ENCODE measurements at regions of chr15 and their contacts with region 1.

Region 1: GRCh38 chr15:71575474-71576045 is 234.8 kb upstream of the NR2E3 start:
- DNase-seq: peak; percentile 36
- H3K4me3 ChIP-seq: no peak overlapping the region
- H3K27ac ChIP-seq: no peak overlapping the region
- H3K4me1 ChIP-seq: no peaks in the 10 kb centered on the region
- H3K27me3 ChIP-seq: no peaks in the 10 kb centered on the region
- CTCF ChIP-seq: peak; percentile 65
- EP300 ChIP-seq: no peak
- RAD21 ChIP-seq: peak; percentile 81

Region 2: DNA sequence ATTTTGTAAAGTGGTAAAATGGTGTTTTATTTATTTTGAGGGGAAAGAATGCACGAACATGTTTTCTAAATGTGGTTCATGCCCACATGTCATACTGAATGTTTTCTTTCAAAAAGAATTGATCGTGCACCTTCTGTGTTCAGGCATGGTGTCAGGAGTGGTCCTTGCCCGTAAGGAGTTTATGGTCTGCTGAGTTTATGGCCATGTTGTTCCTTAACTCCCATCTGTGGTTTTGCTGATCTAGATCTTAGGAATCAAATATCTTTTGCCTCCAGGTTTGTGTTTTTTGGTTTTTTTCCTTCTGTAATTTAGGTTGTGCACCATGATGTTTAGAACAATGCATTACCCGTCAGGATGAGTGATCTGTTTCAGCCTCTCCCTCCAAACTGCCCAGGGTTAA is 69.6 kb before region 1 on chr15:
- CTCF ChIA-PET with region 1: no interaction called
- POLR2A ChIA-PET with region 1: no interaction called
- DNase-seq: no peak
- H3K4me3 ChIP-seq: no peak overlapping the region
- H3K27ac ChIP-seq: no peak overlapping the region
- H3K4me1 ChIP-seq: no peaks in the 10 kb centered on the region
- H3K27me3 ChIP-seq: no peaks in the 10 kb centered on the region
- CTCF ChIP-seq: no peak
- EP300 ChIP-seq: no peak
- RAD21 ChIP-seq: no peak

Region 3: DNA sequence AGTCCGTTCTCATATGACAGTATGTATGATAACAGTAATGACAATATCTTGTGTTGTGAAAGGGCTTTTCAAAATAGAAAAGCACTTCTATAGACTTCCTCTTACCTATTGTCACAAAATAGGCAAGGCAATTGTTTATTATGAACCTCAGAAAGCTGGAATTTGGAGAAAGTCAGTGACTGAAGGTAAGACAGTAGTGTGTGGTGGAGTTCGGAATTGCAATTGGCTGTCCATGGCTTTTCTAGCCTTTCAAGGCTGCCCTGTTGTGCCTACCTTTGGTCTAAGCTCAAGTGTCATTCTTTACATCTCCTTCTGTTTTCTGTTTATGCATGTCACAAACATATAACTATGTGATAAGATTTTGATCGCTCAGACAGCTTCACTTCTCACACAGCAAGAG is 15.5 kb after region 1 on chr15:
- CTCF ChIA-PET with region 1: interaction called, 21 read pairs
- POLR2A ChIA-PET with region 1: no interaction called
- DNase-seq: peak; percentile 23
- H3K4me3 ChIP-seq: no peak overlapping the region
- H3K27ac ChIP-seq: no peak overlapping the region
- H3K4me1 ChIP-seq: no peaks in the 10 kb centered on the region
- H3K27me3 ChIP-seq: no peaks in the 10 kb centered on the region
- CTCF ChIP-seq: peak; percentile 22; the same call in 1 of the 2 replicates
- EP300 ChIP-seq: no peak
- RAD21 ChIP-seq: no peak

Region 4: GRCh38 chr15:71651750-71652186 is 76.2 kb after region 1 on chr15:
- CTCF ChIA-PET with region 1: interaction called, 11 read pairs
- POLR2A ChIA-PET with region 1: no interaction called
- DNase-seq: no peak
- H3K4me3 ChIP-seq: no peak overlapping the region; a peak in 1 of 4 replicates
- H3K27ac ChIP-seq: peak overlapping the region in 1 of 2 experiments; percentile 8; a peak in 1 of 4 replicates
- H3K4me1 ChIP-seq: peaks cover 16 to 24% of the 10 kb centered on the region in 2 experiments
- H3K27me3 ChIP-seq: no peaks in the 10 kb centered on the region
- CTCF ChIP-seq: peak; percentile 66
- EP300 ChIP-seq: no peak
- RAD21 ChIP-seq: peak; percentile 73

Region 5: GRCh38 chr15:71707230-71708050 is 131.9 kb after region 1 on chr15:
- CTCF ChIA-PET with region 1: interaction called, 14 read pairs
- POLR2A ChIA-PET with region 1: no interaction called
- DNase-seq: peak; percentile 37
- H3K4me3 ChIP-seq: no peak overlapping the region
- H3K27ac ChIP-seq: peak overlapping the region; percentile 89 to 95
- H3K4me1 ChIP-seq: peaks cover 21 to 37% of the 10 kb centered on the region in 2 experiments
- H3K27me3 ChIP-seq: no peaks in the 10 kb centered on the region
- CTCF ChIP-seq: no peak
- EP300 ChIP-seq: peak; percentile 39 to 89; a peak in 3 of 4 replicates
- RAD21 ChIP-seq: 0 out of 2 replicates have a peak, but pooled peaks have one; percentile 6

Region 6: DNA sequence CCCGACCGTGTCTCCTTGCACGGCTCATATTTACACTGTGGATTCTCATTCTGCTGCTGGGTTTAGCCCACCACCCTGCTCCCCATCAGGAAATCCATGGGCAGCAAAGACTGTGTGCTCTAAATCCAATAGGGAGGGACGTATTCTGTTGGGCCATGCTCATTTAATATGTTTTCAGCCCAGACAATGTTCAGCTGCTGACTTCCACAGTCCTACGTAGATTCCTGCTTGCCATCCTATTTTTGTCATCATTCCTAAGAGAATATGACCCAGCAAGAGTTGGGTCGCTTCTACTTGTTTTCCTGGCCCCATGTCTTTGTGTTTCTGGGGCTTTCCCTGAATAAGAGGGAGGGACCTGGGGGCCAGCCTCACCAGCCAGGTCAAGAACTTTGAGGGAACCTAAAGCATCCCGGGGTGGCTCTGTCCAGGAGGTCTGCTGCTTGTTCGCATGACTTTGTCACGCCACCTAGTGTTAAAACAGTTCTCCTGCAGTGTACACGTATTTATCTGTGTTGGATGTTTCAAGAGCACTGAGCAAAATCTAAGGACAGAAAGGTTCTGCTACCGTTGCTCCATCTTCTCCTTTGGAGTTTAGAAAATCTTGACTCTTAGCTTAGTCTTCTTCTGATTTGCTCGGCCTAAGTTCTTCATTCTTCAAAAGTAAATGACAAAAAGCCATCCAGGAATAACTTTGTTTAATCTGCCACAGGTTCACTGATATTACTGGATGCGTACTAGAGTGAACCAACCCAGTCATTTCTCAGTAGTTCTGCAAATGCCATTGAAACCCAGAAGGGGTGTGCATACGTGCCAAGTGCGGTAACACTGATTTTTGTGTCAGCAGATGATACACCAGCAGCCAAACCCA is 155.0 kb after region 1 on chr15:
- CTCF ChIA-PET with region 1: interaction called, 58 read pairs
- POLR2A ChIA-PET with region 1: no interaction called
- DNase-seq: peak; percentile 71
- H3K4me3 ChIP-seq: no peak overlapping the region
- H3K27ac ChIP-seq: no peak overlapping the region
- H3K4me1 ChIP-seq: peaks cover 0 to 5% of the 10 kb centered on the region in 2 experiments; a peak in 3 of 4 replicates
- H3K27me3 ChIP-seq: no peaks in the 10 kb centered on the region
- CTCF ChIP-seq: peak; percentile 86
- EP300 ChIP-seq: no peak
- RAD21 ChIP-seq: peak; percentile 88

Region 7: DNA sequence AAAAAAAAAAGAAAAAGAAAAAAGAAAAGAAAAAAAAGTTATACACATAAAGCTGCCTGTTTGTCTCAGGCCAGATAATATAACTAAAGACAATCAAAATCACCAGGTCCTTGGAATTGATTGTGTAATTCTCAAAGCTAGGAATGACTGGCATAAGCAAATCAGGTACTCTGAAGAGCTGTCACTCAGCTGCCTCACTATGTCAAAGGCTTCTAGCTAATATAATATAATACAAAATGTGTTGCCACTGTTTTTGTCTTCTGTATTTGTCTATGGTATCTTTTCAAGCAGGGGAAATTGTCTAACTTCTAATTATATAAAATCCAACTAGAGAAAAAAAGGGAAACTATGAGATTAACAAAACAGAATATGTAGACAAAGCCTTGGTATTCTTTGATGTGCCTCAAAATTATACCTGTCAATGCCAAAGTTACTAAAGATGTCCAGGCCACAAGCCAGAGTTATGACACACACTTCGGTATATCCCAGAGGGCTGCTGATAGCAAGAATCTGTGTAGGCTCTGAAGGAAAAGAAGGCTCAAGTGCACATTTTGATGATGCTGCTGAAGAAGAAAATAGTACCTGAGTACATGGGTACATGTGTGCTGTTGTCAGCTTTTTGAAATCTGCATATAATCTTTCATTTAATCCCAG is 197.8 kb after region 1 on chr15:
- CTCF ChIA-PET with region 1: no interaction called
- POLR2A ChIA-PET with region 1: no interaction called
- DNase-seq: no peak
- H3K4me3 ChIP-seq: no peak overlapping the region
- H3K27ac ChIP-seq: no peak overlapping the region
- H3K4me1 ChIP-seq: no peaks in the 10 kb centered on the region
- H3K27me3 ChIP-seq: no peaks in the 10 kb centered on the region
- CTCF ChIP-seq: no peak
- EP300 ChIP-seq: no peak
- RAD21 ChIP-seq: no peak

Region 8: DNA sequence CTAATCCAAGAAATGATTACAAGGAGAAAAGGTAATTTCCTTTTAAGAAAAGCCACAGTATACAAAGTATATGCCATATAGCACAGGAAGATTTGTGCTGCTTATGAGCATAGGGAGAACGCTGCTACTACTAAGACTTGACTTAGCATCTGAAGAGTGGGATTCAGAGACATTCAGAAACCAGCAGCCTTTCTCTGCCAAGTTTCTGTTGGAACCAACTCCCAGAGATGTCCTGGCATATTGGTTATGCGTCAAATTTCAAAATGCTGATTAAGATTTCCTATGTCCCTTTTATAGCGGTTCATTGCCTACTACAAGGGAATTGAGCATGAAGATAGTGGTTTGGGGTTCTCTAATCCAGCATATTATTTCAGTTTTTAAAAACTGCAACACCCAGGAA is 239.7 kb after region 1 on chr15:
- CTCF ChIA-PET with region 1: no interaction called
- POLR2A ChIA-PET with region 1: no interaction called
- DNase-seq: no peak
- H3K4me3 ChIP-seq: no peak overlapping the region
- H3K27ac ChIP-seq: no peak overlapping the region
- H3K4me1 ChIP-seq: no peaks in the 10 kb centered on the region
- H3K27me3 ChIP-seq: no peaks in the 10 kb centered on the region
- CTCF ChIP-seq: no peak
- EP300 ChIP-seq: no peak
- RAD21 ChIP-seq: no peak

Measured in SK-N-SH (cell line).